ENCODE measurements at regions of chr10 and their contacts with region 1.

Region 1: GRCh38 chr10:60495338-60496055 is 105.8 kb upstream of the ANK3 start:
- DNase-seq: peak; percentile 82
- ATAC-seq: peak; percentile 50
- H3K4me3 ChIP-seq: no peak overlapping the region
- H3K27ac ChIP-seq: no peak overlapping the region
- H3K4me1 ChIP-seq: peaks cover 27% of the 10 kb centered on the region
- H3K27me3 ChIP-seq: no peaks in the 10 kb centered on the region
- CTCF ChIP-seq: peak; percentile 54; the same call in 1 of the 2 replicates

Region 2: GRCh38 chr10:60480865-60481563 is 14.5 kb before region 1 on chr10:
- CTCF ChIA-PET with region 1: no interaction called
- POLR2A ChIA-PET with region 1: no interaction called
- intact Hi-C with region 1: loop called (anchors 1 kb)
- DNase-seq: peak; percentile 100
- ATAC-seq: peak; percentile 82
- H3K4me3 ChIP-seq: peak overlapping the region; percentile 23
- H3K27ac ChIP-seq: peak overlapping the region; percentile 80
- H3K4me1 ChIP-seq: peaks cover 40% of the 10 kb centered on the region
- H3K27me3 ChIP-seq: no peaks in the 10 kb centered on the region
- CTCF ChIP-seq: no peak

Region 3: DNA sequence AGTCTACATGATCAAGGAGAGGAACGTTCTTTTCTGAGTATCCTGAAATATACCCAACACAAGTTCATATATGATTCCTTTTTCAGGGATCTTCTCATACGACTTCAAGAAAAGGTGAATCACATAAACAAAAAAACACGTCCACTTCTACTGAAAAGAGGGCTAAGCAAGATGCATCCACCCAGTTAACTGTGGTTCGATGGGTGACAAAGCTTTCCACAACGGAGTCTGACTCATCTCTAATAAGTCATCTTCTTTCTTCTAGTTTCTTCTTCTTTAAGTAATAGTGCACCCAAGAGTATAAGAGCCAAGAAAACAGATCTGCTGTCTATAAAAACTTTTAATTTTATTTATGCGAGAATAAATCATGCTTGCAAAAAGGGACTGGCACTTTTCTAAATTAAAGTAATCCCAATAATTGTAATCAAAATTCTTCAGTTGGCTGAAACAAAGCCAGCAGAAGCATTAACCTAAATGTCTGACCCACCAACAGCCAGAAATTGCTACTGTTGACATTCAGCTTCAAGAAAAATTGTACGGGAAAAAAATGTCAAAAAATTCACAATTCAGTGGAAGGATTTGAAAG is 41.1 kb after region 1 on chr10:
- CTCF ChIA-PET with region 1: no interaction called
- POLR2A ChIA-PET with region 1: no interaction called
- intact Hi-C with region 1: loop called (anchors 5 kb)
- DNase-seq: peak; percentile 98
- ATAC-seq: peak; percentile 86
- H3K4me3 ChIP-seq: peak overlapping the region; percentile 8
- H3K27ac ChIP-seq: peak overlapping the region; percentile 59
- H3K4me1 ChIP-seq: peaks cover 54% of the 10 kb centered on the region
- H3K27me3 ChIP-seq: no peaks in the 10 kb centered on the region
- CTCF ChIP-seq: no peak; the same call in 1 of the 2 replicates

Region 4: GRCh38 chr10:60572511-60573194 is 77.2 kb after region 1 on chr10:
- CTCF ChIA-PET with region 1: no interaction called
- POLR2A ChIA-PET with region 1: no interaction called
- intact Hi-C with region 1: loop called (anchors 5 kb)
- DNase-seq: peak; percentile 95
- ATAC-seq: peak; percentile 84
- H3K4me3 ChIP-seq: peak overlapping the region; percentile 70
- H3K27ac ChIP-seq: peak overlapping the region; percentile 48
- H3K4me1 ChIP-seq: peaks cover 65% of the 10 kb centered on the region
- H3K27me3 ChIP-seq: no peaks in the 10 kb centered on the region
- CTCF ChIP-seq: 0 out of 2 replicates have a peak, but pooled peaks have one; percentile 11